HepG2 (cell line): ENCODE measurements at regions of chr6 and their contacts with region 1.

Region 1: DNA sequence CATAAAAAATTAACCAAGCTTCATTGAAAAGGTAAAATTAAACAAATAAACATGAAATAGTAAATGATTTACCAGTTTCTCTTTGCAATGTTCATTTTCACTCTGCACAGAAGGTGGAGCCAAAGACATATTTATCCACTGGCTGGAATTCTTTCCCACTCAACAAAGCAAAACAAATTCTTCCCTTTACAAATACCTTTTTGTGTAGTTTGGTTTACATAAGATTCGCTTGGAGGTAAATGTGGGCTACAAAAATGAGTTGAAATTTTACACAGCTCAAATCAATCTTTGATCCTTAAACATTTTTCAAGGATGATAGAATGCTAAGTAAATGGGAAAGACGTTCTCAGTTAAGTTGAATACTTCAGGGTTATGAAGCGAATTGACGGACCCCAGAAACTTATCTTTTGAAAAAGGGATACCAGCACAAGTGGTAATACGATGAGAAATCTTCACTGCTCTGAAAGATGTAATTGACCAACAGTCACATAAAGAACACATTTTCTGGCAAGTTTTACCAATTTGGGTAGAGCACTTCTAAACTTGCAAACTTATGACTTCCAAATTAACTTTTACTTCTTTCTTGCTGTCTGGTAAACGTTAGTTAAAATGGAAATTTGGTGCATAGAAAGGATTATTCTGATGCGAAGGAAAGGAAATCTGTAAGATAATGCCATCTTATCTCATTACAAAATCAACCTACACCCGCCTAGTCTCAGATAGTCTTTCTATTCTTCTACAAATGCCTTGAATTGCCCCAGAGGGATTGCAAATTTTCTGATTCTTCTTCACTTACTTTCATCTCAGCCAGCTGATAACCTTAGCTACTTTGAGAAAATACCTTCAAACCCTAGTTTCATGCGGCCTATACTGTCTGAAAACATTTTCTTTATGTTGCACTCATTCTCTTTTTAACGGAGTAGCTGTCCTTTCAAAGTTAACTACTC is 4.7 kb upstream of the GJA1 start:
- DNase-seq: peak; percentile 62
- ATAC-seq: peak; percentile 88
- H3K4me3 ChIP-seq: no peak overlapping the region
- H3K27ac ChIP-seq: no peak overlapping the region
- H3K4me1 ChIP-seq: peaks cover 13% of the 10 kb centered on the region
- H3K27me3 ChIP-seq: no peaks in the 10 kb centered on the region; a peak in 1 of 5 replicates
- CTCF ChIP-seq: peak; percentile 84
- EP300 ChIP-seq: no peak
- POLR2A ChIP-seq: no peak
- RAD21 ChIP-seq: peak; percentile 78

Region 2: GRCh38 chr6:121664158-121664557 is 233.4 kb after region 1 on chr6:
- CTCF ChIA-PET with region 1: no interaction called
- POLR2A ChIA-PET with region 1: no interaction called
- in situ Hi-C with region 1: no loop called
- intact Hi-C with region 1: no loop called
- DNase-seq: no peak
- ATAC-seq: no peak
- H3K4me3 ChIP-seq: no peak overlapping the region
- H3K27ac ChIP-seq: no peak overlapping the region
- H3K4me1 ChIP-seq: no peaks in the 10 kb centered on the region
- H3K27me3 ChIP-seq: no peaks in the 10 kb centered on the region
- CTCF ChIP-seq: no peak
- EP300 ChIP-seq: no peak
- POLR2A ChIP-seq: no peak
- RAD21 ChIP-seq: no peak

Region 3: GRCh38 chr6:121849477-121849876 is 418.7 kb after region 1 on chr6:
- CTCF ChIA-PET with region 1: interaction called, 15 read pairs
- POLR2A ChIA-PET with region 1: no interaction called
- in situ Hi-C with region 1: loop called (anchors 10 kb)
- intact Hi-C with region 1: loop called (anchors 1 kb)
- DNase-seq: peak; percentile 67
- ATAC-seq: peak; percentile 100
- H3K4me3 ChIP-seq: no peak overlapping the region
- H3K27ac ChIP-seq: no peak overlapping the region
- H3K4me1 ChIP-seq: no peaks in the 10 kb centered on the region
- H3K27me3 ChIP-seq: no peaks in the 10 kb centered on the region
- CTCF ChIP-seq: peak; percentile 86
- EP300 ChIP-seq: no peak
- POLR2A ChIP-seq: no peak
- RAD21 ChIP-seq: peak; percentile 62

Region 4: DNA sequence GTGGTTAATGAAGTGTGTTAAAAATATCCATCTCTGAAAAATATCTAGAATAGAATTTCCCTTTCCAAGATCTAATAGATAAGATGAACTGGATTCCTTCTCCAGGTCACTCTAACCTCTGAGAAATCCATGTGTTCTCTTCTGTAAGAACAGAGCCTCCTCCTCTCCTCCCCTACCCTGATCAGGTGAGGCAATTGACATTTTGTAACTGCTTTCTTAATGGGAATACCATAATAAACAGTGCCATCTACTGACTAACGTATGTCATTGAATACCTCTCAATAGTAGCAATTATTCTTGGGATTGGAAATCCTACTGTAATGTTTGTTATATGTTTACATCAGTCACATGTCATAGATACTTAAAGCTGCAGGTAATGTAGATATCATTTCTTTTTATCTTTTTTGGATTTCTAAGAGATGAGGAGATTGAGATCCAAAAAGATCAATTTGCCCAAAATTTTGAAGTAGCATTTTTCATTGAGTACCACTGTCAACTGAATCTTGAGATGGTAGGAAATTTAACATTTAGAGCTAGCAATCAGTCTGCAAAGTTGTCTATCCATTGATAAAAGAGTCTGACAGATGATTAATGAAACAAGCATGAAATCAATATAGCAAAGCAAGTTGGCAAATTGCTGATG is 602.9 kb after region 1 on chr6:
- CTCF ChIA-PET with region 1: interaction called, 16 read pairs
- POLR2A ChIA-PET with region 1: no interaction called
- in situ Hi-C with region 1: loop called (anchors 5 kb)
- intact Hi-C with region 1: loop called (anchors 1 kb)
- DNase-seq: peak; percentile 55
- ATAC-seq: peak; percentile 96
- H3K4me3 ChIP-seq: no peak overlapping the region
- H3K27ac ChIP-seq: no peak overlapping the region
- H3K4me1 ChIP-seq: no peaks in the 10 kb centered on the region
- H3K27me3 ChIP-seq: no peaks in the 10 kb centered on the region
- CTCF ChIP-seq: peak; percentile 77
- EP300 ChIP-seq: no peak
- POLR2A ChIP-seq: no peak
- RAD21 ChIP-seq: peak; percentile 51; the same call in 1 of the 2 replicates

Region 5: DNA sequence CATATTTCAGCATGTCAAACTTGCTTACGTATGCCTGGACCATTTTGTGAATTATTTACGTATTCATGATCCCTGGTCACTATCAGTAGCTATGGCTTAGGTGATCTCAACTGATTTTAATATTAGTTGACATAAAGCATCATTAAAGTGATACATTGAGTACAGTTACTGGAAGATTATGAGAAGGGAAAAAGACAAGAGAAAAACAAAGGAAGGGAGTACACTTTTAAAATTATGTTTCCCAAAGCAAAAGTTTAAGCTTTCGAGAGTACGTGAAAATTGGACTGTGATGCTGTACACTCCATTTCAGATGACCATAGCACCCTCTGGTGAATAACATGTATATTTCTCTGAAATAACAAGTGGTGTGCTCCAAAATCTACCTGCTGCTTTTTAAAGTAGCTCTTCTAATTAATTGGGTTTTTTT is 753.6 kb after region 1 on chr6:
- CTCF ChIA-PET with region 1: no interaction called
- POLR2A ChIA-PET with region 1: no interaction called
- in situ Hi-C with region 1: no loop called
- intact Hi-C with region 1: loop called (anchors 1 kb)
- DNase-seq: peak; percentile 16
- ATAC-seq: peak; percentile 72
- H3K4me3 ChIP-seq: no peak overlapping the region
- H3K27ac ChIP-seq: no peak overlapping the region
- H3K4me1 ChIP-seq: no peaks in the 10 kb centered on the region
- H3K27me3 ChIP-seq: no peaks in the 10 kb centered on the region
- CTCF ChIP-seq: peak; percentile 39; the same call in 1 of the 2 replicates
- EP300 ChIP-seq: no peak
- POLR2A ChIP-seq: no peak
- RAD21 ChIP-seq: no peak

Region 6: DNA sequence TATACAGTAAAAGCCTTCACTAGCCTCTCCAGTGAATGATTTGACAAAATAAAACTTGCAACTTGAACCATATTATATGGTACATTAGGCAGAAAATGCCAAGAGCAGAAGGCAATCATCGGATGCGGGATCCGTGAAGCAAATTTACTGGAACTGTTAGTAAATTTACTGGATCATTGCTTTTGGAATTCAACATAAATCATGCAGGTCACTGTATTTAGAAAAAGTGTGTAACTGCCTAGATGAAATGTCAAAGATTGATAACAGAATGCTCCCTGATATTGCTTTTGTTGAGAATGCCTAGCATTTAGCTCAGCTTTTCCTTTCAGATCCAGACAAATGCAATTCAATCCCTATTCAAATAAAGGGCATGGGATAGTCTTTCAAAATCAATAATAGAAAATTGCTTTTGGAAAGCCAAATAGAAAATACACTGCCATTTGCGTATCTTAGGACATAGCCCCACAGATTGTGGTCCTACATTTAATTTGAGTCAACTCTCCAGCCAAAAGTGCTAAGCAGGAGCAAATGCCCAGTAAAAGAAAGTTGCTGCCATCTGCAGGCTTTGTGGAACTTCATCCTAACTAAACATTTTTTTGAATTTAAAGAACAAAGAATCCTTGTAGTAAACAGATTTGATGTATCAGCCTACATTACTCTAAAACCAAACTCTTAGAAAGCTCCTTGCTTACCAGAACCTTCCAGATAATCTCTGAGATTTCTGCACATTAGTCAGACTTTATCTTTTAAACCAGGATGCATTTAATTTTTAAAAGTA is 859.2 kb after region 1 on chr6:
- CTCF ChIA-PET with region 1: interaction called, 3 read pairs
- POLR2A ChIA-PET with region 1: no interaction called
- in situ Hi-C with region 1: no loop called
- intact Hi-C with region 1: loop called (anchors 1 kb)
- DNase-seq: peak; percentile 13
- ATAC-seq: no peak
- H3K4me3 ChIP-seq: no peak overlapping the region
- H3K27ac ChIP-seq: no peak overlapping the region
- H3K4me1 ChIP-seq: no peaks in the 10 kb centered on the region
- H3K27me3 ChIP-seq: no peaks in the 10 kb centered on the region
- CTCF ChIP-seq: 0 out of 2 replicates have a peak, but pooled peaks have one; percentile 20
- EP300 ChIP-seq: no peak
- POLR2A ChIP-seq: no peak
- RAD21 ChIP-seq: no peak

Region 7: GRCh38 chr6:122372647-122373046 is 941.9 kb after region 1 on chr6:
- CTCF ChIA-PET with region 1: no interaction called
- POLR2A ChIA-PET with region 1: no interaction called
- in situ Hi-C with region 1: no loop called
- intact Hi-C with region 1: loop called (anchors 5 kb)
- DNase-seq: no peak
- ATAC-seq: no peak
- H3K4me3 ChIP-seq: no peak overlapping the region
- H3K27ac ChIP-seq: no peak overlapping the region
- H3K4me1 ChIP-seq: no peaks in the 10 kb centered on the region
- H3K27me3 ChIP-seq: no peaks in the 10 kb centered on the region; a peak in 1 of 5 replicates
- CTCF ChIP-seq: no peak
- EP300 ChIP-seq: no peak
- POLR2A ChIP-seq: no peak
- RAD21 ChIP-seq: no peak

Region 8: GRCh38 chr6:122839477-122839876 is 1408.7 kb after region 1 on chr6:
- CTCF ChIA-PET with region 1: no interaction called
- POLR2A ChIA-PET with region 1: no interaction called
- in situ Hi-C with region 1: no loop called
- intact Hi-C with region 1: no loop called
- DNase-seq: peak; percentile 64
- ATAC-seq: peak; percentile 97
- H3K4me3 ChIP-seq: no peak overlapping the region
- H3K27ac ChIP-seq: no peak overlapping the region
- H3K4me1 ChIP-seq: no peaks in the 10 kb centered on the region
- H3K27me3 ChIP-seq: peaks cover 0 to 14% of the 10 kb centered on the region in 2 experiments; a peak in 2 of 5 replicates
- CTCF ChIP-seq: peak; percentile 87
- EP300 ChIP-seq: no peak
- POLR2A ChIP-seq: no peak
- RAD21 ChIP-seq: peak; percentile 66